PC-3 (cell line): ENCODE measurements at regions of chr11 and their contacts with region 1.

Region 1: DNA sequence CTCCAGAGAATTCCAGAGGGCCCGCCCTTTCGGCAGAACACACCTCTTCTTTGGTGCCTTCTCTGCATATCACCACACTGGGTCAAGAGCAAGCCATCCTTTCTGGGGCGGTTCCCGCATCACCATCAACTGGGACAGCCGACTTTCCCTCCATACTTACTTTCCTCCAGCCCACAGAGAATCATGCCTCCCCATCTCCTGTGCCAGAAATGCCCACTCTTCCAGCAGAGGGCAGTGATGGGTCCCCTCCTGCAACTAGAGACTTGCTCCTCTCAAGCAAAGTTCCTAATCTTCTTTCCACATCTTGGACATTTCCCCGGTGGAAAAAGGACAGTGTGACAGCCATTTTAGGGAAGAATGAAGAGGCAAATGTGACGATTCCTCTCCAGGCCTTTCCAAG is 157.7 kb downstream of the C11orf91 start:
- DNase-seq: peak; percentile 72
- ATAC-seq: peak; percentile 68
- H3K4me3 ChIP-seq: no peak overlapping the region
- H3K27ac ChIP-seq: no peak overlapping the region
- H3K4me1 ChIP-seq: peaks cover 27% of the 10 kb centered on the region
- H3K27me3 ChIP-seq: no peaks in the 10 kb centered on the region
- CTCF ChIP-seq: peak; percentile 79

Region 2: GRCh38 chr11:33362051-33362910 is 180.6 kb before region 1 on chr11:
- CTCF ChIA-PET with region 1: no interaction called
- POLR2A ChIA-PET with region 1: no interaction called
- intact Hi-C with region 1: loop called (anchors 5 kb)
- DNase-seq: peak; percentile 71
- ATAC-seq: peak; percentile 53
- H3K4me3 ChIP-seq: no peak overlapping the region
- H3K27ac ChIP-seq: no peak overlapping the region
- H3K4me1 ChIP-seq: no peaks in the 10 kb centered on the region
- H3K27me3 ChIP-seq: no peaks in the 10 kb centered on the region
- CTCF ChIP-seq: peak; percentile 76

Region 3: DNA sequence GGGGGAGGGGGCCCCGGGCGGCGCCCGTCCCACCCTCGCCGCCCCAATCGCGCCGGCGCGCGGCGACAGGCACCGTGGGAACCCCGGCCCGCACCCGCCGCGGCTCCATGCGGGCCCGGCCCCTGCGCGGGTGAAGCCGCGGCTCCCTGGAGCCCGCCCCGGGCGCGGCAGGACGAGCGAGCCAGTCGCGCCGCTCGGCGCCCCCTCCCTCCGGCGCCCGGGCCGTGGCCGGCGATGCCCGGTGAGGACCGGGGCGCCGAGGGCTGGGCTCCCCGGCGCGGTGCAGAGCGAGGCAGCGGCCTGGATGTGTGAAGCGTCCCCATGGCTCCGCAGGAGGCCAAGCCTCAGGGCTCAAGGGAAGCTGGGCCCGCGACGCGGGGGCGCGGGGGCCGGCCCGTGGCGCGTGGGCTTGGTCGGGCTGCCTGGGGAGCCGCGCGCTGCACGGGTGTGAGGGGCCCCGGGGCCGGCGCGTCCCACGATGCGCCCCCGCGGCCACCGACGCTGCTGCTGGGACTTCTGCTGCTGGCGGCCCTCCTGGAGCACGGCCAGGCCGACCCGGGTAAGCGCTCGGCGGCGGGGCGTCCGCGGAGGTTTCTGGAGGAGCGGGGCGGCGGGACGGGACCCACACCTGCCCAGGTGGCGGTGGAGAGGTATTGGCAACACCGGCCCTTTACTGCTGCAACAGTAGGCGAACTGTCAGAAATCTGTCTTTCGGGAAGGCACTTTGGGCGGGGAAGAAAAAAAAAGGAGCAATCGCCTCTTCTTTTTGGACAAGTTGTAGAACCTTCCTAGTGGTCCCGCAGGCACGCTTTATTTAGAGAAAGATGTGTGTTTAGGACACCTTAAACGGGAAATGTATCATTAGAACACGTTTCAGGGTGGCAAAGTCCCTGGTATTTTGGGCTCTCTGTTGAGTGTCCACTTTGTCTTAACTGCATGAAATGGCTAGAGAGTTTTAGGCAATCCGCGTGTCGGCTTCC is 166.3 kb before region 1 on chr11:
- CTCF ChIA-PET with region 1: no interaction called
- POLR2A ChIA-PET with region 1: no interaction called
- intact Hi-C with region 1: loop called (anchors 1 kb)
- DNase-seq: no peak
- ATAC-seq: peak; percentile 25
- H3K4me3 ChIP-seq: peak overlapping the region; percentile 70
- H3K27ac ChIP-seq: no peak overlapping the region
- H3K4me1 ChIP-seq: peaks cover 48% of the 10 kb centered on the region
- H3K27me3 ChIP-seq: no peaks in the 10 kb centered on the region
- CTCF ChIP-seq: no peak

Region 4: DNA sequence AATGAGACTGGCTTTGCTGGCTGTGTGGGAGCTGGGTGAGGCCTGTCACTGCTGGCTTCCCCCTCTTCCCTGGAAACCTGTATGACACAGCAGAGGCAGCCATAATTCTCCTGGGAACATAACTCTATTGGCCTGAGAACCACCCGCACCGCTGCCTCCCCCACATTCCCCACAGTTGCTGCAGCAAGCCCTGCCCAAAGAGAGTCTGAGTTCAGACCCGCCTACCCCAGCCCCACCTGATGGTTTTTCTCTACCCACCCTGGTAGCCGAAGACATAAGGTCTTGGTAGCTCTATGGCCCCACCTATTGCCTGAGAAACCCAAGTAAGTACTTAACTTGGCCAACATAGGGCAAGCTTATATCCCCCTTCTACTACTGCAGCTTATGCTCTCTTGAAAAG is 17.1 kb before region 1 on chr11:
- CTCF ChIA-PET with region 1: no interaction called
- POLR2A ChIA-PET with region 1: no interaction called
- intact Hi-C with region 1: no loop called
- DNase-seq: no peak
- ATAC-seq: no peak
- H3K4me3 ChIP-seq: no peak overlapping the region
- H3K27ac ChIP-seq: no peak overlapping the region
- H3K4me1 ChIP-seq: peaks cover 4% of the 10 kb centered on the region; the same call in 1 of the 2 replicates
- H3K27me3 ChIP-seq: no peaks in the 10 kb centered on the region
- CTCF ChIP-seq: no peak

Region 5: GRCh38 chr11:33633241-33633901 is 90.5 kb after region 1 on chr11:
- CTCF ChIA-PET with region 1: no interaction called
- POLR2A ChIA-PET with region 1: no interaction called
- intact Hi-C with region 1: loop called (anchors 5 kb)
- DNase-seq: peak; percentile 89
- ATAC-seq: peak; percentile 77
- H3K4me3 ChIP-seq: peak overlapping the region; percentile 51; the same call in 1 of the 2 replicates
- H3K27ac ChIP-seq: peak overlapping the region; percentile 88
- H3K4me1 ChIP-seq: peaks cover 45% of the 10 kb centered on the region
- H3K27me3 ChIP-seq: no peaks in the 10 kb centered on the region
- CTCF ChIP-seq: no peak